ENCODE measurements at regions of chr3 and their contacts with region 1.

Region 1: GRCh38 chr3:24494618-24495325 is at the start of gene THRB:
- DNase-seq: peak; percentile 83 to 91
- ATAC-seq: peak; percentile 68 to 77 (median 73)
- H3K4me3 ChIP-seq: peak within 1 kb of the TSS; percentile 90
- H3K27ac ChIP-seq: peak within 1 kb of the TSS; percentile 96
- H3K4me1 ChIP-seq: peaks cover 35% of the 10 kb centered on the region
- H3K27me3 ChIP-seq: no peaks in the 10 kb centered on the region
- CTCF ChIP-seq: peak; percentile 46
- total RNA-seq, gene THRB: 29.1 to 38.6 (median 33.1) TPM

Region 2: GRCh38 chr3:23999012-23999641 is 495.6 kb before region 1 on chr3:
- intact Hi-C with region 1: loop called in 1 of 2 experiments (anchors 10 kb)
- DNase-seq: peak; percentile 61 to 76
- ATAC-seq: peak in 1 of 4 donors; percentile 74
- H3K4me3 ChIP-seq: no peak overlapping the region
- H3K27ac ChIP-seq: no peak overlapping the region
- H3K4me1 ChIP-seq: no peaks in the 10 kb centered on the region
- H3K27me3 ChIP-seq: no peaks in the 10 kb centered on the region
- CTCF ChIP-seq: peak; percentile 85

Region 3: GRCh38 chr3:24264748-24265158 is 230.0 kb before region 1 on chr3:
- intact Hi-C with region 1: loop called (anchors 5 kb)
- DNase-seq: no peak
- ATAC-seq: peak in 3 of 4 donors; percentile 37 to 58 (median 40)
- H3K4me3 ChIP-seq: no peak overlapping the region
- H3K27ac ChIP-seq: no peak overlapping the region
- H3K4me1 ChIP-seq: peaks cover 36% of the 10 kb centered on the region
- H3K27me3 ChIP-seq: no peaks in the 10 kb centered on the region
- CTCF ChIP-seq: peak; percentile 76

Region 4: DNA sequence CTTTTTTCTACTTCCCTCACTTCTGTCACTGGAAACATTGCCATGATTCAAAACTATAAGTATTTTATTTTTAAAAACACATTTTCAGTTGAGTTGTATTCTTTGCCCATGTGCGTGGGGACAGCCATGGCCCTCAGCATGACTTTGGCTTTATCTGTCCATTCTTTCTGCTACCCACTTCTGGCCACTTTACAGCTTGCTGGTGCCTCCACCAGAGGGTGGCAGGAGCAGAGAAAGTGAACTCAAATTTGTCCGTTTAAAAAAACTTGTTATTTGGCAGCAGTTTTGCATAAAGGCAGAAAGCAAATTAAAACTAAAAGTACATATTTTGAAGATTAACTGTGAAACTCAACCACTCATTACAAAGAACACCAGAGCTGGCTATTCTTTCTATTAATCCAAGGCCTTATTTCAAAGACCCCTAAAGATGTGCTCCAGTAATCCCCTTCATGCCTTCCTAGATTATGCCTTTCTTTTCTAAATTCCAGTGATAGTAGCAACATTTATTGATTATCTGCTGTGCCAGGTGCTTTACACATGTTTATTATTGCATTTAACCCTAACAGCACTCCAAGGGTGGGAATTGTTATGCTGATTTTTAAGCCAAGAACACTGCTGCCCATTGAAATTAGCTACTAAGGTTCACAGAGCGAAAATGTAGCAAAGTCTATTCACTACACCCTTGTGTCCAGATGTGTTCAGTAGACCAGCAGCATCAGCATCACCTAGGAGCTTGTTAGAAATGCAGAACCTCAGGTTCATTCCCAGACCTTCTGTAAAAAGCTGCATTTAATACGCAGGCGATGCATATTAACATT is 134.9 kb before region 1 on chr3:
- intact Hi-C with region 1: loop called in 1 of 2 experiments (anchors 5 kb)
- DNase-seq: no peak
- ATAC-seq: no peak
- H3K4me3 ChIP-seq: no peak overlapping the region
- H3K27ac ChIP-seq: no peak overlapping the region
- H3K4me1 ChIP-seq: peaks cover 16% of the 10 kb centered on the region
- H3K27me3 ChIP-seq: no peaks in the 10 kb centered on the region
- CTCF ChIP-seq: peak; percentile 15

Region 5: GRCh38 chr3:24545913-24546312 is 51.1 kb after region 1 on chr3:
- intact Hi-C with region 1: loop called in 1 of 2 experiments (anchors 10 kb)
- DNase-seq: peak; percentile 46 to 64
- ATAC-seq: peak; percentile 85 to 97 (median 92)
- H3K4me3 ChIP-seq: peak overlapping the region; percentile 36
- H3K27ac ChIP-seq: peak overlapping the region; percentile 86
- H3K4me1 ChIP-seq: peaks cover 44% of the 10 kb centered on the region
- H3K27me3 ChIP-seq: no peaks in the 10 kb centered on the region
- CTCF ChIP-seq: no peak

Measured in psoas muscle (tissue), 8 donors.